Activated CD4-positive, alpha-beta memory T cell treated with anti-CD3 and anti-CD28 coated beads, Interleukin-2, amount 10 ng/mL, durations not matched to agents 7 days and 5 days (primary cell): ENCODE measurements at regions of chr6 and their contacts with region 1.

Region 1: GRCh38 chr6:43687437-43688347 is at the start of gene MRPS18A:
- DNase-seq: peak; percentile 88
- H3K4me3 Mint-ChIP-seq: peak within 1 kb of the TSS; percentile 81
- H3K27ac Mint-ChIP-seq: peak within 1 kb of the TSS; percentile 80
- H3K4me1 Mint-ChIP-seq: peaks cover 40% of the 10 kb centered on the region
- H3K27me3 Mint-ChIP-seq: no peaks in the 10 kb centered on the region
- total RNA-seq, gene MRPS18A: 38.5 to 40.5 TPM

Region 2: GRCh38 chr6:43635387-43636307 is 52.0 kb before region 1 on chr6 and contains the start of gene MAD2L1BP:
- CTCF ChIA-PET with region 1: no interaction called
- POLR2A ChIA-PET with region 1: interaction called, 11 read pairs
- DNase-seq: peak; percentile 92
- H3K4me3 Mint-ChIP-seq: peak within 1 kb of the TSS; percentile 94
- H3K27ac Mint-ChIP-seq: peak within 1 kb of the TSS; percentile 87
- H3K4me1 Mint-ChIP-seq: peaks cover 57% of the 10 kb centered on the region
- H3K27me3 Mint-ChIP-seq: no peaks in the 10 kb centered on the region
- total RNA-seq, gene MAD2L1BP: 40.4 to 41.8 TPM

Region 3: DNA sequence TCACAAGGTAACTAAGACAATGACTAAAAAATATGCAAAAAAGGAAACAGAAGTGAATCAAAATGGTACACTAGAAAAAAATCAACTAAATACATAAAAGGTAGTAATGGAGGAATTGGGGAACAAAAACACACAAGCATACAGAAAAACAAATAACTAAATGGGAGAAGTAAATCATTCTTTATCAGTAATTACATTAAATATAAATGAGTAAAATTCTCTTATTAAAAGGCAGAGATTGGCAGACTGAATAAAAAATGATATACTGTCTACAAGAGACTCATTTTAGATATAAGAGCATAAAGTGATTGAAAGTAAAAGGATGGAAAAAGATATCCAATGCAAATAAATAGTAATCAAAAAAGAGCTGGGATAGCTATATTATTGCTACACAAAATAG is 42.9 kb after region 1 on chr6:
- CTCF ChIA-PET with region 1: no interaction called
- POLR2A ChIA-PET with region 1: no interaction called
- DNase-seq: no peak
- H3K4me3 Mint-ChIP-seq: no peak overlapping the region
- H3K27ac Mint-ChIP-seq: no peak overlapping the region
- H3K4me1 Mint-ChIP-seq: peaks cover 26% of the 10 kb centered on the region
- H3K27me3 Mint-ChIP-seq: peaks cover 3% of the 10 kb centered on the region